ENCODE measurements at regions of chr12 and their contacts with region 1.

Region 1: GRCh38 chr12:48750769-48751735 is 34.5 kb upstream of the CCNT1 start:
- DNase-seq: no peak
- H3K4me3 ChIP-seq: no peak overlapping the region
- H3K27ac ChIP-seq: no peak overlapping the region
- H3K4me1 ChIP-seq: no peaks in the 10 kb centered on the region
- H3K27me3 ChIP-seq: no peaks in the 10 kb centered on the region
- CTCF ChIP-seq: no peak
- POLR2A ChIP-seq: no peak

Region 2: GRCh38 chr12:48631057-48631456 is 120.0 kb before region 1 on chr12:
- intact Hi-C with region 1: no loop called
- DNase-seq: no peak
- H3K4me3 ChIP-seq: no peak overlapping the region
- H3K27ac ChIP-seq: no peak overlapping the region
- H3K4me1 ChIP-seq: no peaks in the 10 kb centered on the region
- H3K27me3 ChIP-seq: no peaks in the 10 kb centered on the region
- CTCF ChIP-seq: no peak
- POLR2A ChIP-seq: no peak

Region 3: GRCh38 chr12:48795480-48796455 is 44.7 kb after region 1 on chr12:
- intact Hi-C with region 1: loop called (anchors 5 kb)
- DNase-seq: peak; percentile 77 to 81
- H3K4me3 ChIP-seq: no peak overlapping the region
- H3K27ac ChIP-seq: no peak overlapping the region
- H3K4me1 ChIP-seq: no peaks in the 10 kb centered on the region
- H3K27me3 ChIP-seq: no peaks in the 10 kb centered on the region
- CTCF ChIP-seq: peak; percentile 93 to 99 (median 96)
- POLR2A ChIP-seq: no peak